Caco-2 (cell line): ENCODE measurements at regions of chr17 and their contacts with region 1.

Region 1: DNA sequence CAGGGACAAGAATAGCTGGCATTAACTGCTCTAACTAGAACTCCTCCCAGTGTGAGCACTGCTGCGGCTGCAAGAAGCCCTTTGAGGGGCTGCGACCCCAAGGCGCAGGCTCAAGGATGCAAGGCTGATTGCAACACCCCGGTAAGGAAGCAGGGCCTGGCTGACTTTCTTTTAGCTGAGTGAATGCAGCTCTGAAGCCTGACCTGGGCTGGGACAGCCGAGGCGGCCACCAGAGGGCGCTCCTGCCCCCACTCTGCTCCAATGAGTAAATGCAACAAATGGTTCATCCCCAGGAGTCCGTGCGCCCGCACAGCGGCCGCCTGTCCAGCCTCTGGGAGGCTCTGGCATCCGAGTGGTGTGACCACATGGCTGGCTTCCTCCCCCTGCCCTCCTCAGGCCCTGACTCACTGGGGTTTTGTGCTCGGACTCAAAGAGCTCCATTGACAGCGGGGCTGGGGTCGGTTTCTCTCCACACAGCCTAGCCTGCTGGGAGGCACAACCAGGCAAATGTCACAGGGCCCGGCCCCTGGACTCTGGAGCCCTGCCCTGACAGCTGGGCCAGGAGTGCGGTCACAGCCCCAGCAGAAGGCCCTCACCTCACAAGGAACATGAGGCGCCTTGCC is at the start of gene SMIM5:
- DNase-seq: peak; percentile 86 to 91
- H3K4me3 ChIP-seq: no peak within 1 kb of the TSS
- H3K4me3 Mint-ChIP-seq: peak within 1 kb of the TSS; percentile 41
- H3K27ac Mint-ChIP-seq: peak within 1 kb of the TSS; percentile 70
- H3K4me1 ChIP-seq: peaks cover 19% of the 10 kb centered on the region
- H3K4me1 Mint-ChIP-seq: peaks cover 9% of the 10 kb centered on the region
- H3K27me3 ChIP-seq: no peaks in the 10 kb centered on the region
- H3K27me3 Mint-ChIP-seq: no peaks in the 10 kb centered on the region
- CTCF ChIP-seq: peak; percentile 95 to 98
- total RNA-seq, gene SMIM5: 0.20 TPM in 1 of 2 replicates, not detected in the other

Region 2: GRCh38 chr17:75325827-75326225 is 307.1 kb before region 1 on chr17:
- CTCF ChIA-PET with region 1: no interaction called
- POLR2A ChIA-PET with region 1: no interaction called
- intact Hi-C with region 1: no loop called
- DNase-seq: no peak
- H3K4me3 ChIP-seq: no peak overlapping the region
- H3K4me3 Mint-ChIP-seq: no peak overlapping the region
- H3K27ac Mint-ChIP-seq: no peak overlapping the region
- H3K4me1 ChIP-seq: 0 out of 2 replicates have a peak, but pooled peaks cover 5% of the 10 kb centered on the region
- H3K4me1 Mint-ChIP-seq: no peaks in the 10 kb centered on the region
- H3K27me3 ChIP-seq: no peaks in the 10 kb centered on the region
- H3K27me3 Mint-ChIP-seq: no peaks in the 10 kb centered on the region
- CTCF ChIP-seq: no peak

Region 3: DNA sequence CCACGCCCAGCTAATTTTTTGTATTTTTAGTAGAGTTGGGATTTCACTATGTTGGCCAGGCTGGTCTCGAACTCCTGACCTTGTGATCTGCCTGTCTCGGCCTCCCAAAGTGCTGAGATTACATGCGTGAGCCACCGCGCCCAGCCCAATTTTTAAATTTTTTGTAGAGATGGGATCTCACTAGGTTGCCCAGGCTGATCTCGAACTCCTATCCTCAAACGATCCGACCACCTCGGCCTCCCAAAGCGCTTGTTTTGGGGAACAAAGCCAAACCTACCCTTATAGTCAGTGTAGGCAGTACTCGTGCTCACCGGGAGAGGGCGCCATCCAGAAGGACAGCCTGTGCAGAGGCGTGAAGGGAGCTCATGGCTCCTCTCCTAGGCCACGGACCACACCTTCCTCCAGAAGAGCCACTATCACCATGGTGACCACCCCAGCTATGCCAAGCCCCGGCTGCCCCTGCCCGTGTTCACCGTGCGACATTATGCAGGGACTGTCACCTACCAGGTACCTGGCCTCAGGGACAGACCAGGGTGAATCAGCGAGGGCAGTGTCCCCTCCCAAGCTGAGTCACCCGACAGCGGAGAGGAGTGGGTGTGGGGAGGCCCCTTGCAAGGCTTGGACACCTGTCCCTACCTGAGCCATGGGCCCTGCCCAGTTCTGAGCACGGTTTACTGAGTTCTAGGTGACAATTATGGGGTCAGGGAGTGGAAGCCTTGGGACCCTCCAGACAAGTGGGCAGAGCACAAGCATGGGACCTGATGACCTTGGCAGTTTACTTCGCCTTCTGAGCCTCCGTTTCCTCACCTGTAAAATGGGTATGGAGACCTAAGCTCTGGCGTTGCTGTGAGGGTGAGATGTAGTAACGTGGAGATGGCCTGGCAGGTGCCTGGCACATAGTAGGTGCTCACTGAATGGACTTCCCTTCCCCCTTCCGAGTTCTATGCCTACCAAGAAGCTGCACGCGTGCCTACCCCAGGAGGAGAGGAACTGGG is 31.6 kb before region 1 on chr17:
- CTCF ChIA-PET with region 1: interaction called, 23 read pairs
- POLR2A ChIA-PET with region 1: no interaction called
- intact Hi-C with region 1: no loop called
- DNase-seq: peak; percentile 71 to 79
- H3K4me3 ChIP-seq: no peak overlapping the region
- H3K4me3 Mint-ChIP-seq: no peak overlapping the region
- H3K27ac Mint-ChIP-seq: no peak overlapping the region
- H3K4me1 ChIP-seq: no peaks in the 10 kb centered on the region
- H3K4me1 Mint-ChIP-seq: no peaks in the 10 kb centered on the region
- H3K27me3 ChIP-seq: no peaks in the 10 kb centered on the region
- H3K27me3 Mint-ChIP-seq: no peaks in the 10 kb centered on the region
- CTCF ChIP-seq: peak; percentile 57 to 76

Region 4: DNA sequence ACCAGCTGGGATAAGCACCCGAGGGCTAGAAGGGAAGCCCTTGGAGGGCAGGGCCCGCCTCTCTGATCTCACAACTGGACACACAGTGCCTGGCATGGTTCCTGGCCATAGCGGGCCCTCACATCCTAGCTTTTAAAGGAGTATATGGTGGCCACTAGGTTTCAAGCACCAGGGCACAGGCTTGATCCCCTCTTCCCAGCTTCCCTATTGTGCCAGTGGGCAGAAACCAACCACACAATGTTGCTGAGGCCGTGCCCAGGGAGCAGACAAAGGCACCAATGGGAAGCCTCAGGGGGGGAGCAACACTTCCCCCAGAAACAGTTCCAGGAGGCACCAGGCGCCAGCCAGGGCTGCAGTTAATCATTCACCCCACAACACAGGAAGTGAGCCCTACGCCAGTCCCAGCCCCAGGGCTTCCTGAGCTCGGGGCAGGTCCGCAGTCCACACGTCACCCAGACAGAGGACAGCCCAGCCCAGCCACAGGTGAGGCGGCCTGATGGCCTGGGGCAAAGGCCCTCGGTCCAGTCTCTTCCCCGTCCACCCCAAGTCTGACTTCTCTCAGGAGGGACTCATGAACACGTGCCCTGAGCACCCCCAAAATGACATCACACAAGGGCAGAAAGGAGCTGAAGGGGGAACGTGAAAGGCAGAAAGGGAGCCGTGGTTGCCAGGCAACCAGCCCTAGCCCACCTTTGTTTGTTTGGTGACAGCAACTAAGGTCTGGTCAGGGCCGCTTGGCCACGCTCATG is 13.1 kb after region 1 on chr17:
- CTCF ChIA-PET with region 1: interaction called, 115 read pairs
- POLR2A ChIA-PET with region 1: interaction called, 13 read pairs
- intact Hi-C with region 1: loop called (anchors 2 kb)
- DNase-seq: peak; percentile 96 to 97
- H3K4me3 ChIP-seq: 0 out of 2 replicates have a peak overlapping the region, but pooled peaks have one; percentile 5
- H3K4me3 Mint-ChIP-seq: peak overlapping the region; percentile 43
- H3K27ac Mint-ChIP-seq: peak overlapping the region; percentile 96
- H3K4me1 ChIP-seq: peaks cover 48% of the 10 kb centered on the region
- H3K4me1 Mint-ChIP-seq: peaks cover 23% of the 10 kb centered on the region
- H3K27me3 ChIP-seq: no peaks in the 10 kb centered on the region
- H3K27me3 Mint-ChIP-seq: no peaks in the 10 kb centered on the region
- CTCF ChIP-seq: peak in 1 of 2 experiments; percentile 2

Region 5: DNA sequence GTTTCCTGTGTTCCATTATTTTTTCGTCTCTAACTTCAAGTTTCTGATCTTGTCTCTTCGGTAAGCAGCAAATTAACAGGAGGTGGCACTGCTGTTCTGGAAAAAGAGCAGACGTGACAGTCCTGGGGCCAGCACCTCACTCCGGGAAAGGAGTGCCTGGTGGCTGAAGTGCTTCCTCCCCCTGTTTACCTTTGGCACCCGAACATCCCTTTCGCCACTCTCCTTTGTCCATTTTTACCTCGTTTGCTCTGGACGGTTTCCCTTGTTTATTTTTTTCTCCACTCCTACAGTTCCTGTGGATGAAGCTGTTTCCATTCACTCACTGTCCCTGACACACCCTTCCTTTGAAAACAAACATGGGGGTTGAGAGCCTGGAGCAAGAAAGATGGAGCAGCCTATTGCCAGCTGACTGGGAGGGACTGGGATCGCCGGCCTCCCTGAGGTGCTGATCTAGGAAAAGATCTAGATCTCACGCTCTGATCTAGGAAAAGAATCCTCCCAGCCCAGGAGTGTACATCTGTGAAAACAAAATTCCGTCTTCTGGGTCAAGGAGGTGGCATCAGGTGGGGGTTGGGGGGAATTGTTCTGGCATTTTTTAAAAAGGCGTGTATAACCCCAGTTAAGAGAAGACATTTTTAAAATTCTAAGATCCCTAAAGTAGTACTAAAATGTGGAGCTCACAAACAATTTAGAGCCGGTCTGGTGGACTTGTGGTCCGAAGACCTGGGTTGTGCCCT is 46.9 kb after region 1 on chr17:
- CTCF ChIA-PET with region 1: interaction called, 11 read pairs
- POLR2A ChIA-PET with region 1: no interaction called
- intact Hi-C with region 1: no loop called
- DNase-seq: peak; percentile 30 to 58
- H3K4me3 ChIP-seq: no peak overlapping the region
- H3K4me3 Mint-ChIP-seq: peak overlapping the region; percentile 4
- H3K27ac Mint-ChIP-seq: peak overlapping the region; percentile 27
- H3K4me1 ChIP-seq: peaks cover 18% of the 10 kb centered on the region
- H3K4me1 Mint-ChIP-seq: peaks cover 23% of the 10 kb centered on the region
- H3K27me3 ChIP-seq: no peaks in the 10 kb centered on the region
- H3K27me3 Mint-ChIP-seq: no peaks in the 10 kb centered on the region
- CTCF ChIP-seq: peak; percentile 16 to 30

Region 6: GRCh38 chr17:75764711-75765421 is 131.9 kb after region 1 on chr17 and contains the start of gene GALK1:
- CTCF ChIA-PET with region 1: interaction called, 15 read pairs
- POLR2A ChIA-PET with region 1: no interaction called
- intact Hi-C with region 1: no loop called
- DNase-seq: peak; percentile 73 to 81
- H3K4me3 ChIP-seq: peak within 1 kb of the TSS; percentile 75
- H3K4me3 Mint-ChIP-seq: peak within 1 kb of the TSS; percentile 75
- H3K27ac Mint-ChIP-seq: peak within 1 kb of the TSS; percentile 75
- H3K4me1 ChIP-seq: peaks cover 24% of the 10 kb centered on the region
- H3K4me1 Mint-ChIP-seq: peaks cover 5% of the 10 kb centered on the region
- H3K27me3 ChIP-seq: no peaks in the 10 kb centered on the region
- H3K27me3 Mint-ChIP-seq: no peaks in the 10 kb centered on the region
- CTCF ChIP-seq: peak; percentile 65 to 73
- total RNA-seq, gene GALK1: 41.1 and 45.0 TPM in 2 replicates